OCI-LY7 (cell line): ENCODE measurements at regions of chr1 and their contacts with region 1.

Region 1: GRCh38 chr1:4027492-4028138 is 127.5 kb upstream of the C1orf174 start:
- DNase-seq: peak; percentile 96
- H3K4me3 ChIP-seq: peak overlapping the region; percentile 55
- H3K27ac ChIP-seq: peak overlapping the region; percentile 96
- H3K4me1 ChIP-seq: peaks cover 75% of the 10 kb centered on the region
- CTCF ChIP-seq: no peak

Region 2: DNA sequence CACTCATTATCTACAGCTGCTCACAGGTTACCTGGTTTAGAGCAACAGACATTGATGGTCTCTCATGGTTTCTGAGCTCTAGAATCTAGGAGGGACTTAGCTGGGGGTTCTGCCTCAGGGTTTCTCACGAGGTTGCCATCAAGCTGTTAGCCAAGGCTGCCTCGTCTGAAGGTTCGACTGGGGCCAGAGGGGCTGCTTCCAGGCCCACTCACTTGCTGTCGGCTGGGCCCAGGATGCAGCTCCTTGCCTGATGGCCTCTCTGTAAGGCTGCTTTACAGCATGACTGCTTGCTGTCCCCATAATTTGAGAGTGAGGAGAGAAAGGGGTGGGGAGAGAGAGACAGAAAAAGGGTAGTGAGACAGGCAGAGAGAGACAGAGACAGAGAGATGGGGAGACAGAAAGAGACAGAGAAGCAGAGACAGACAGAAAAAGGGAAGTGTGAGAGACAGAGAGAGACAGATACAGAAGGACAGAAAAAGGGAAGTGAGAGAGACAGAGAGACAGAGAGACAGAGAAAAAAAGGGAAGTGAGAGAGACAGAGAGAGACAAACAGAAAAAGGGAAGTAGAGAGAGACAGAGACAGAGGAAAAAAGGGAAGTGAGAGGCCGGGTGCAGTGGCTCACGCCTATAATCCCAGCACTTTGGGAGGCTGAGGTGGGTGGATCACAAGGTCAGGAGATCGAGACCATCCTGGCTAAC is 20.8 kb before region 1 on chr1:
- CTCF ChIA-PET with region 1: no interaction called
- POLR2A ChIA-PET with region 1: interaction called, 3 read pairs
- intact Hi-C with region 1: loop called (anchors 1 kb)
- DNase-seq: peak; percentile 72
- H3K4me3 ChIP-seq: no peak overlapping the region
- H3K27ac ChIP-seq: peak overlapping the region; percentile 95
- H3K4me1 ChIP-seq: peaks cover 25% of the 10 kb centered on the region
- CTCF ChIP-seq: no peak

Region 3: GRCh38 chr1:4253935-4254334 is 226.3 kb after region 1 on chr1:
- CTCF ChIA-PET with region 1: no interaction called
- POLR2A ChIA-PET with region 1: no interaction called
- intact Hi-C with region 1: no loop called
- DNase-seq: no peak
- H3K4me3 ChIP-seq: no peak overlapping the region
- H3K27ac ChIP-seq: no peak overlapping the region
- H3K4me1 ChIP-seq: peaks cover 4% of the 10 kb centered on the region
- CTCF ChIP-seq: no peak